Activated CD4-positive, alpha-beta T cell treated with anti-CD3 and anti-CD28 coated beads, Interleukin-2, amount 10 ng/mL, durations not matched to agents 7 days and 5 days (primary cell): ENCODE measurements at regions of chr20 and their contacts with region 1.

Region 1: DNA sequence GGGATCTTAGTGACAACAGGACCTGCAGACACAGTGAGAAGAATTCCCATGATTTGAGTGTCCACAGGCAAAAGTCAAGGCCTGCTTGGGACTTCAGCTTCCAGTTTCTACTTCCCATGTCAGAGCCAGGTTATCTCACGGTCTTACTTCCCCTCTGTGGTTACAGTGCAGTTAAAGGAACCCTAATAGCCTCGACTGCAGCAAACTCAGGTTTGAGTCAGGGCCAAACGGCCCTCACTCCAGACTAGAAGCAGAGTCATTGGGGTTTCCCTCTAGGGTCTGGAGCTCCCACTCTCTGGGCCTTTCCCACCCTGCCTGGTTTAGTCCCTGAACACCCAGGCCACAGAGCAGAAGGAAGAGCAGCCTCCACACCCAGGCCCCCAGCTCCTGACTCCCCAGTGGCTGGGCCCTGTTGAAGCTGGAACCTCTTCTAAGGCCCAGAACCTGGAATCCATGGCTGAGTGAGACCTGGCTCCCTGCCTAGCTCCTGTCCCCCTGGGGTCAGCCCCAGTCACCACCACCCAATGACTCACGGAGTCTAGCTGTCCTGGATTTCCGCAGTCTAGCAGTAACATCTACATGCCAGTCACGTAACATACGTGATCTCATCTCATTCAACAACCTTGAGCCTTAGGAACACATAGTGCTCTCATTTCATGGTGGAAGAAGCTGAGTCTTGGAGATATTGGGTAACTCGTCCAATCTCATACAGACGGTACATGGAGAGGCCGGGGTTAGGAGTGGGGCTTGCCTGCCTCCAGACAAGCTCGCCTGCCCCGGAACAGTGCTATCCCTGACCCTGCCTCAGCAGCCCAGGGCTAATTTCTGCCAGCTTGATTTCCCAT is 9.2 kb upstream of the GHRH start:
- DNase-seq: no peak
- H3K4me3 Mint-ChIP-seq: no peak overlapping the region
- H3K27ac Mint-ChIP-seq: no peak overlapping the region
- H3K4me1 Mint-ChIP-seq: peaks cover 7% of the 10 kb centered on the region
- H3K27me3 Mint-ChIP-seq: peaks cover 4% of the 10 kb centered on the region

Region 2: GRCh38 chr20:37308086-37309050 is 37.6 kb after region 1 on chr20:
- CTCF ChIA-PET with region 1: no interaction called
- POLR2A ChIA-PET with region 1: no interaction called
- DNase-seq: no peak
- H3K4me3 Mint-ChIP-seq: no peak overlapping the region
- H3K27ac Mint-ChIP-seq: no peak overlapping the region
- H3K4me1 Mint-ChIP-seq: peaks cover 8% of the 10 kb centered on the region
- H3K27me3 Mint-ChIP-seq: no peaks in the 10 kb centered on the region

Region 3: DNA sequence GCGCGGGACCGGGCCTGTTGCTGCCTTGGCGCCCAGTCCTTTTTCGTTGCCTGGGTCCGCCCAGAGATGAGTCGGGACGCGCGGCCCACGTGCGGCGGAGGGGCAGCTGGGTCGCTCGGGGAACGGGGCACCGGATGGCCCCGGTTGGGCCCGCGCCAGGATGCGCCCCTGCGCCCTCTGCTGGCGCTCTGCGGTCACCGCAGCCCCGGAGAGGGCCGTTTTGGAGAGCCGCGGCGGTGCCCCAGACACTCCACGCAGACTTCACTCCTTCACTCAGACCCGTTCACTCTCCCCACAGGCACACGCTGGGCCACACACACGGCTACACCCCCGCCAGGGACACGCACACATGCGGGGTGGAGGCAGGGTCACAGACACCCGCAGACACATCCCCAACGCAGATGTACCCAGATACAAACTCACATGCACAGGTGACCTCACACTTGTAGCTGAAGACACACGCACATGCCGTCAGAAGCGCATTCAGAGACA is 113.9 kb after region 1 on chr20:
- CTCF ChIA-PET with region 1: interaction called, 21 read pairs
- POLR2A ChIA-PET with region 1: no interaction called
- DNase-seq: peak; percentile 74
- H3K4me3 Mint-ChIP-seq: peak overlapping the region; percentile 46
- H3K27ac Mint-ChIP-seq: peak overlapping the region; percentile 86
- H3K4me1 Mint-ChIP-seq: peaks cover 4% of the 10 kb centered on the region
- H3K27me3 Mint-ChIP-seq: peaks cover 2% of the 10 kb centered on the region